ENCODE measurements at regions of chr6 and their contacts with region 1.

Region 1: DNA sequence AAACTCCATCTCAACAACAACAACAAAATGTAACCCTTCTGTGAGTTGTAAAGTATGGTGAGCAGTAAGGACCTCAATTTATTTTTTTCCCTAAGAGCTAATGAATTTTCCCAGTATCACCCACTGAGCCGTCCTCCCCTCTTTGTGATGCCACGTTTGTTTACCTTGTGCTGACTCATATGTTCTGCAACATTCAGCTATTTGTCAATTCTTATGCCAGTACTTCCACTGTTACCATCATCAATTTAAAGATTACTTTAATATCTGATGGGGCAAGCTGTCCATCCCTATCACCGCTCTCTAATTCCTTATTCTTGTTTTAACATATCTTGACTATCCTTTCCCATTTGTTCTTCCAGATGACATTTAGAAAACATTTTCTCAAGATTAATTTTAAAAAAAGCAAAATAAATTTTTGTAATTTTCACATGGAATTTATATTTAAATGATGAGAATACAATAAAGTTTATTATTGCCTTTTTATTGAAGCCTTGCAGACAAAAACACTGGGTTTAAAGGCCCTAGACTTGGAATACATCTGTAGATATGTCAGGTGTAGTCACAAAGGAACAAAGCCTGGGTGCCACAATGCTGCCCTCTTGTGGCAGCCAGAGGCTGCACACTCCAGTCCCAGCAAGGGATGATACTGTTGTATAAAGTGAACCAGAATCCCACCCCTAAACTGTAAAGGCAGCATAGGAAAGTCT is 37.4 kb downstream of the MAK start:
- DNase-seq: peak; percentile 43
- H3K4me3 ChIP-seq: no peak overlapping the region
- H3K27ac ChIP-seq: no peak overlapping the region
- H3K4me1 ChIP-seq: peaks cover 6% of the 10 kb centered on the region
- H3K27me3 ChIP-seq: no peaks in the 10 kb centered on the region
- CTCF ChIP-seq: peak; percentile 98 to 99

Region 2: GRCh38 chr6:10510592-10511367 is 290.2 kb before region 1 on chr6:
- CTCF ChIA-PET with region 1: no interaction called
- dilution Hi-C with region 1: loop called (anchors 25 kb)
- in situ Hi-C with region 1: loop called (anchors 10 kb)
- intact Hi-C with region 1: loop called (anchors 1 kb)
- DNase-seq: peak; percentile 27
- H3K4me3 ChIP-seq: no peak overlapping the region
- H3K27ac ChIP-seq: no peak overlapping the region
- H3K4me1 ChIP-seq: no peaks in the 10 kb centered on the region
- H3K27me3 ChIP-seq: no peaks in the 10 kb centered on the region
- CTCF ChIP-seq: peak; percentile 84 to 86

Region 3: DNA sequence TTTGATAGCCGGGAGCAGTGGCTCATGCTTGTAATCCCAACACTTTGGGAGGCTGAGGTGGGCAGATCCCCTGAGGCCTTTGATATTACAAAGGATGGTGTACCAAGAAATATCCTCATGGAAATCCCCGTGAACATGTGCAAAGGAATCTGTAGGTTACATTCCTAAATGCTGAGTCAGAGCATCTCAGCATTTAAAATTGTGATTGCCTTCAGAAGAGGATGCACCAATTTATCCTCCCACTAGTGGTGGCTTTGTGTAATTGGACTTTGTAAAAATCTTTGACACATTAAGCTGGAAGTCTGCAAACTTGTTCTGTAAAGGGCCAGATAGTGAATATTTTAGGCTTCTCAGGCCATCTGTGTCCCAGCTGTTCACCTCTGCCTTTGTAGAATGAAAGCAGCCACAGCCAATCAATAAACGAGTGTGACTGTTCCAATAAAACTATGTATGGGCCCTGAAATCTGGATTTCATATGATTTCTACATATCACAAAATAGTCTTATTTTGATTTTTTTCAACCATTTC is 41.6 kb before region 1 on chr6:
- CTCF ChIA-PET with region 1: no interaction called
- dilution Hi-C with region 1: no loop called
- in situ Hi-C with region 1: no loop called
- intact Hi-C with region 1: loop called (anchors 1 kb)
- DNase-seq: peak; percentile 96
- H3K4me3 ChIP-seq: no peak overlapping the region
- H3K27ac ChIP-seq: peak overlapping the region; percentile 84
- H3K4me1 ChIP-seq: peaks cover 21% of the 10 kb centered on the region
- H3K27me3 ChIP-seq: no peaks in the 10 kb centered on the region
- CTCF ChIP-seq: peak; percentile 58 to 67